ENCODE measurements at regions of chr6 and their contacts with region 1.

Region 1: DNA sequence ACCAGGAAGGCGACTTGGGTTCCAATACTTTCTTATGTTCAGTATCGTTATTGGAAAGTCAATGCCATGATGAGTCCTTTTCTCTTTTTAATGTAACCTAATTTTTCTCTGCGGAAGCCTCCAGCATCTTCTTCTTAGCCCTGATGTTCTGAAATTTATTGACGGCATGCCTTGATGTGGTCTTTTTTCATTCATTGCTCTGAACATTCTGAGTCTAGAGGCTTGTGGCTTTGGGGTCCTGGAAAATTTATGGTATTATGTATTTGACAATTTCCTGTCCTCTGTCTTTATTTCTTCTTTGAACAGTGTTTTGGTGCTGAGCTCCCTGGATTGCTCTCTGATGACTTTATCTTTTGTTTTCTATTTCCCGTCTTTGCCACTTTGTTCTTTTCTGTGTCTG is 28.7 kb upstream of the MAS1 start:
- H3K4me3 Mint-ChIP-seq: no peak overlapping the region
- H3K27ac Mint-ChIP-seq: no peak overlapping the region
- H3K4me1 Mint-ChIP-seq: peaks cover 5% of the 10 kb centered on the region
- H3K27me3 Mint-ChIP-seq: no peaks in the 10 kb centered on the region

Region 2: GRCh38 chr6:158910484-158911348 is 951.4 kb before region 1 on chr6:
- intact Hi-C with region 1: no loop called
- H3K4me3 Mint-ChIP-seq: no peak overlapping the region
- H3K27ac Mint-ChIP-seq: peak overlapping the region; percentile 32
- H3K4me1 Mint-ChIP-seq: peaks cover 33% of the 10 kb centered on the region
- H3K27me3 Mint-ChIP-seq: no peaks in the 10 kb centered on the region

Region 3: DNA sequence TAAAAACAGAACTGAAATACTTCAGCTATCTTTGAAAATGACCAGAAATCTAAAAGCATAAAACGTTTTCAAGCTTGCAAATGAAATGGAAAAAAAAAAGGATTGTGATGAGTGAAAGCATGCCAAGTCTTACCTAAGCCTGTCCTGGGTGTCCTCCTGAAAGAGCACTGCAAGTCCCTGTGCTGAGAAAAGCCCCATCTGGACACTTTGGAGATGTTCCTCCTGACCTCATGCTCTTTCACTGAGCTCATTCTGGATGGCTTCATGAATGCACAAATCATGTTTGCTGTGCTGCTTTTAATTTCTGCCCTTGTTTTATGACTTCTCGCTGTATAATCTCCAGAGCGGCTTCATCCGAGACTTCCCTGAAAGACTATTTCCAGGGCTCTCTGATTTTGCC is 305.1 kb before region 1 on chr6:
- intact Hi-C with region 1: no loop called
- H3K4me3 Mint-ChIP-seq: no peak overlapping the region
- H3K27ac Mint-ChIP-seq: no peak overlapping the region
- H3K4me1 Mint-ChIP-seq: no peaks in the 10 kb centered on the region
- H3K27me3 Mint-ChIP-seq: no peaks in the 10 kb centered on the region

Region 4: GRCh38 chr6:159777240-159777904 is 84.7 kb before region 1 on chr6:
- intact Hi-C with region 1: no loop called
- H3K4me3 Mint-ChIP-seq: no peak overlapping the region
- H3K27ac Mint-ChIP-seq: no peak overlapping the region
- H3K4me1 Mint-ChIP-seq: peaks cover 8% of the 10 kb centered on the region
- H3K27me3 Mint-ChIP-seq: no peaks in the 10 kb centered on the region

Region 5: GRCh38 chr6:159941286-159942113 is 79.4 kb after region 1 on chr6:
- intact Hi-C with region 1: loop called (anchors 2 kb)
- H3K4me3 Mint-ChIP-seq: no peak overlapping the region
- H3K27ac Mint-ChIP-seq: no peak overlapping the region
- H3K4me1 Mint-ChIP-seq: peaks cover 22% of the 10 kb centered on the region
- H3K27me3 Mint-ChIP-seq: peaks cover 20% of the 10 kb centered on the region

Region 6: DNA sequence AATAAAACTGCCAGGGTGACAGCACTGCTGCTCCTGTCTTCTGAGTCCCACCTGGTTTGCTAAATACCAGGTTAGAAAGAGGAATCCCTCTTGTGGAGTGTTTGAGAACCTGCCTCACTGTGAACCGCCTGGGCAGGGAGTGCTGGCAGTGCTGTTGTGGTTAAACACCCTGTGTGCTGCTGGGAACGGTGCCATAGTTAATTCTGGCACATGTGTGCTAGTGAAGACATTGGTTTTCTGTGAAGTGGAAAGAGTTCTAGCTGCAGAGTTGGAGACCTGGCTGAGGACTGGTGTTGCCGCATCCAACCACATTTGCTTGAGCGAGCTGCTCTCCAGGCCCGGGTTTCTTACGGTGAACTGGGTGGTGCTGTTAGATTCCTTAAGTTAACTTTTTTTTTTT is 179.5 kb after region 1 on chr6:
- intact Hi-C with region 1: loop called (anchors 10 kb)
- H3K4me3 Mint-ChIP-seq: no peak overlapping the region
- H3K27ac Mint-ChIP-seq: no peak overlapping the region
- H3K4me1 Mint-ChIP-seq: no peaks in the 10 kb centered on the region
- H3K27me3 Mint-ChIP-seq: no peaks in the 10 kb centered on the region

Region 7: GRCh38 chr6:160102956-160103824 is 241.1 kb after region 1 on chr6:
- intact Hi-C with region 1: loop called (anchors 5 kb)
- H3K4me3 Mint-ChIP-seq: no peak overlapping the region
- H3K27ac Mint-ChIP-seq: no peak overlapping the region
- H3K4me1 Mint-ChIP-seq: peaks cover 28% of the 10 kb centered on the region
- H3K27me3 Mint-ChIP-seq: no peaks in the 10 kb centered on the region

Region 8: DNA sequence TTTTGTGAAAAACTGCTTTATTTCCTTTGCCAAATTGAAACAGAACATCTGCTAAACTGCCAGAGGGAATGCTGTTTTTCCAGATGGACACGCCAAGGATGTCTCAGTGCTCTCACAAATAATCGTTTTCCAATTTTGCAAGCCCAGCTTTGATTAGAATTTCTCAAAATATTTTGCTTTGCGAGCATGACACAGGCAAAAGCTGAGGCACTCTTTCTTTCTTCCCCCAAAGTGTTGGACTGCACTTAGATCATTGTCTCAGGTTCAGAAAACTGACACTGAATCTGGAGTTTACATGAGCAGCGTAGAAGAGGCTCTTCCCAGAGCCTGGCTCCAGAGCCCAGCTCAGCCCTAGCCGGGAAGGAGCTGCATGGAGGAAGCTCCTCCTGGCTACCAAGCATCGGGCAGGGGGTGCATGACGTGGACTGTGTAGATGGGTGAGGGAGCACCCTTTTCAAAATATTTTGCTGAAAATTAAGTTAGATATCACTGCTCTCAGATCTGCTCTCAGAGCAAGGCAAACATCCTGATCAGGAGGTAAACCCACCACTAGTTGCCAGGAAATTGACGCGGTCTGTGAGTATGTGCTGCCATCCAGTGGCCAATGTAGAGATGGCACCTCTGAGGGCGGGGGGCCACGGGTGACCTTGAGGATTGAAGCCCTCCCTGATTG is 593.6 kb after region 1 on chr6:
- intact Hi-C with region 1: loop called (anchors 10 kb)
- H3K4me3 Mint-ChIP-seq: no peak overlapping the region
- H3K27ac Mint-ChIP-seq: no peak overlapping the region
- H3K4me1 Mint-ChIP-seq: peaks cover 29% of the 10 kb centered on the region
- H3K27me3 Mint-ChIP-seq: peaks cover 23% of the 10 kb centered on the region

Measured in dendritic cell treated with granulocyte-macrophage colony-stimulating factor and Interleukin-4, amounts not matched to agents 40 ng/mL and 50 ng/mL, for 4 days (primary cell).